K562 (cell line): ENCODE measurements at regions of chr12 and their contacts with region 1.

Region 1: DNA sequence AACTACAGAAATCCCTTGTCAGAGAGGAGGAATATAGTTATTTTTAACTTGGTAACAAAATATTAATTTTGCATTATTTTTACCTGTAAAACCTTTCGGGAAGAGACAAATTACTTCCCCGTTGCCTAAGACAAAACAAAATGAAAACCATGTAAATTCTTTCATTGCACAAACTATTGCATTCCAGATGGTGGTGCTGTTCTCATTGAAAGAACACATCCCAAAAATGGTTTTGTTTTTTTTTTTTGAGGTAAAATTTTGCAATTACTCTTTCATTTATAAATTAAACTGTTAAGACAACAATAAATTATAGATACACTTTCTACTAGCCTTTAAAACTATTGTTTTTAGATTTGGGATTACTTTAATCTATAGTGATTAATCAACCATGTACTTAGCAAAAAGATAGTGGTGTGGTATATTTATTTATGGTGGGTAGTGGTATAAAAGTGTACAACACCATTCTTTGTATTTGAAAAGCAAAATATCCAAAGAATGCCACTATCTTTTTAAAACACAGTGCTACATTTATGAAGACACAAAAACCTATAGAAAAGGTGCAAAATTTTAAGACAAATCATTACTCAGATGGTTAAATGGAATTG is 115.5 kb downstream of the SLC38A1 start:
- DNase-seq: peak in 2 of 4 experiments; percentile 16 to 17
- ATAC-seq: no peak
- H3K4me3 ChIP-seq: no peak overlapping the region
- H3K27ac ChIP-seq: no peak overlapping the region
- H3K4me1 ChIP-seq: no peaks in the 10 kb centered on the region
- H3K27me3 ChIP-seq: no peaks in the 10 kb centered on the region
- CTCF ChIP-seq: peak; percentile 40 to 82 (median 52); a peak in 4 of 6 replicates
- EP300 ChIP-seq: no peak
- POLR2A ChIP-seq: no peak
- RAD21 ChIP-seq: peak; percentile 48 to 75; a peak in 3 of 4 replicates

Region 2: DNA sequence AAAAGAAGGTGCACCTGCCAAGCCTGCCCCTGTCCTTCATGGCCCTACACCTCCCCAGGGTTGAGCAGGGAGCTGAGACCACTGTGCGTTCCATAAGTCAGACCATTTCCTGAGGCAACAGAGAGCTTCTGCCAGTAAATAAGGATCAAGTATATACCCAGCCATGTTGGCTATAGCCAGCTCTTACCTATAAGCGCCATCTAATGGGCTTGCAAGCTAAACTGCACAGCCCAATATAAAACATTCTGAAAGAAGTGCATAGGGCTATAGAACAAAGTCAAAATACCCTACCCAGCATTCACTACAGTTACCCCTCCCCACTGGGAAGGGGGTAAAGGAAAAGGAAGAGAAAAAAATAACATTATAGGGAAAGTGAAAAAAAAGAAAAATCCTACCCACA is 103.7 kb before region 1 on chr12:
- CTCF ChIA-PET with region 1: no interaction called
- POLR2A ChIA-PET with region 1: no interaction called
- in situ Hi-C with region 1: no loop called
- intact Hi-C with region 1: no loop called
- DNase-seq: no peak
- ATAC-seq: peak; percentile 55
- H3K4me3 ChIP-seq: no peak overlapping the region
- H3K27ac ChIP-seq: no peak overlapping the region
- H3K4me1 ChIP-seq: no peaks in the 10 kb centered on the region
- H3K27me3 ChIP-seq: no peaks in the 10 kb centered on the region
- CTCF ChIP-seq: peak in 1 of 3 experiments; percentile 16; a peak in 1 of 6 replicates
- EP300 ChIP-seq: no peak
- POLR2A ChIP-seq: no peak
- RAD21 ChIP-seq: peak in 1 of 2 experiments; percentile 43; a peak in 2 of 4 replicates

Region 3: DNA sequence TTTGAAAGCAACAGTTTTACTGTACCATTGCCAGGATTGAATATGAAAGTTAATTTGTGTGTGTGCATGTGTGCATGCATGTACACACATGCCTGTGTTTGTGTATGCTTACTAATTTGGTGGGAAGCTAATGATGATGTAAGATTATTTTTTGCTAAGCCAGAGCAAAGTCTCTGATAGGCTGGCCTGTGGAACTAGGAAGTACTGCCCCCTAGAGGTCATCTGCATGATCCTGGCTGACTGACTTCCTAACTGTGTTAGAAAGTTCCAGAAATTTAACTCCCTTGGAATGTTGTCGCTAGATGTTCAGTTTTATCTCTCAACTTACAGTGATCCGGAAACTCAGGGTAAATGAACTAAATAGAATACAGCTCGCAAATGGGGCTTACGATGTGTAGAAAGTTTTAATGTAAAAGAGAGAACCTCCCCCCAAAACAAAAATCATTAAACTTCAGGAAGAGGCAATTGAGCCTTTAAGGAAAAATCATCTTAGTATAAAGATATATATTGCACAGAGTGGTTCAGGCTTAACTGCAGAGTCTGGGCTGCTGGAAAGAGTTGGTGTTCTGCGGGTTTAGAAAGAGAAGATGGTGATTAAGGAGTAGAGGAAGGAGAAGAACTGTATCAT is 149.8 kb after region 1 on chr12:
- CTCF ChIA-PET with region 1: no interaction called
- POLR2A ChIA-PET with region 1: no interaction called
- in situ Hi-C with region 1: no loop called
- intact Hi-C with region 1: loop called (anchors 1 kb)
- DNase-seq: peak; percentile 57 to 74 (median 65)
- ATAC-seq: peak; percentile 97
- H3K4me3 ChIP-seq: no peak overlapping the region
- H3K27ac ChIP-seq: no peak overlapping the region
- H3K4me1 ChIP-seq: no peaks in the 10 kb centered on the region
- H3K27me3 ChIP-seq: no peaks in the 10 kb centered on the region
- CTCF ChIP-seq: peak; percentile 47 to 58 (median 55)
- EP300 ChIP-seq: no peak
- POLR2A ChIP-seq: no peak
- RAD21 ChIP-seq: peak in 1 of 2 experiments; percentile 75; a peak in 2 of 4 replicates

Region 4: DNA sequence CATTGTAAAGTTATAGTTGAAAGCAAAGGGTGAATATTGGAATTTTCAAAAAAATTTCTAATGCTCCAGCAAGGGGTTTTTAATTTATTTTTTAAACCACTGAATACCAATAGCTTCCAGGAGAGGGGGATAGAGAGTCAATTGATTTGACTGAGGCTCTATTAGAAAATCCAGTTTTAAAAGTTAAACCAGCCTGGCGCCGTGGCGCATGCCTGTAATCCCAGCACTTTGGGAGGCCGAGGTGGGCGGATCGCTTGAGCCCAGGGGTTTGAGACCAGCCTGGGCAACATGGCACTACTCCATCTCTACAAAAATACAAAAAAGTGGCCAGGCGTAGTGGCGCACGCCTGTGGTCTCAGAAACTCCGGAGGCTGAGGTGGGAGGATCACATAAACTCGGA is 522.4 kb after region 1 on chr12:
- CTCF ChIA-PET with region 1: interaction called, 5 read pairs
- POLR2A ChIA-PET with region 1: no interaction called
- in situ Hi-C with region 1: no loop called
- intact Hi-C with region 1: loop called (anchors 5 kb)
- DNase-seq: peak in 3 of 4 experiments; percentile 17 to 46 (median 26)
- ATAC-seq: peak; percentile 59
- H3K4me3 ChIP-seq: no peak overlapping the region
- H3K27ac ChIP-seq: no peak overlapping the region
- H3K4me1 ChIP-seq: no peaks in the 10 kb centered on the region; a peak in 1 of 5 replicates
- H3K27me3 ChIP-seq: no peaks in the 10 kb centered on the region
- CTCF ChIP-seq: peak; percentile 36 to 60 (median 45); a peak in 4 of 6 replicates
- EP300 ChIP-seq: no peak
- POLR2A ChIP-seq: no peak
- RAD21 ChIP-seq: peak; percentile 32 to 48

Region 5: GRCh38 chr12:46933947-46934346 is 780.6 kb after region 1 on chr12:
- CTCF ChIA-PET with region 1: no interaction called
- POLR2A ChIA-PET with region 1: no interaction called
- in situ Hi-C with region 1: no loop called
- intact Hi-C with region 1: loop called (anchors 10 kb)
- DNase-seq: peak in 1 of 4 experiments; percentile 15
- ATAC-seq: peak; percentile 66; the same call in 1 of the 3 replicates
- H3K4me3 ChIP-seq: no peak overlapping the region
- H3K27ac ChIP-seq: no peak overlapping the region
- H3K4me1 ChIP-seq: no peaks in the 10 kb centered on the region
- H3K27me3 ChIP-seq: peaks cover 0 to 3% of the 10 kb centered on the region in 2 experiments; a peak in 1 of 5 replicates
- CTCF ChIP-seq: peak; percentile 19 to 50 (median 19); a peak in 3 of 6 replicates
- EP300 ChIP-seq: no peak
- POLR2A ChIP-seq: no peak
- RAD21 ChIP-seq: peak; percentile 74 to 75